CD14-positive monocyte (primary cell): ENCODE measurements at regions of chr1 and their contacts with region 1.

Region 1: GRCh38 chr1:108897865-108898720 is 21.3 kb downstream of the GPSM2 start:
- DNase-seq: peak; percentile 38 to 69 (median 50)
- H3K4me3 ChIP-seq: no peak overlapping the region
- H3K4me3 Mint-ChIP-seq: no peak overlapping the region
- H3K27ac ChIP-seq: no peak overlapping the region
- H3K27ac Mint-ChIP-seq: peak overlapping the region in 2 of 7 donors; percentile 31 to 55
- H3K4me1 ChIP-seq: no peaks in the 10 kb centered on the region
- H3K4me1 Mint-ChIP-seq: peaks cover 7% of the 10 kb centered on the region
- H3K27me3 ChIP-seq: no peaks in the 10 kb centered on the region
- H3K27me3 Mint-ChIP-seq: no peaks in the 10 kb centered on the region
- CTCF ChIP-seq: peak; percentile 81

Region 2: DNA sequence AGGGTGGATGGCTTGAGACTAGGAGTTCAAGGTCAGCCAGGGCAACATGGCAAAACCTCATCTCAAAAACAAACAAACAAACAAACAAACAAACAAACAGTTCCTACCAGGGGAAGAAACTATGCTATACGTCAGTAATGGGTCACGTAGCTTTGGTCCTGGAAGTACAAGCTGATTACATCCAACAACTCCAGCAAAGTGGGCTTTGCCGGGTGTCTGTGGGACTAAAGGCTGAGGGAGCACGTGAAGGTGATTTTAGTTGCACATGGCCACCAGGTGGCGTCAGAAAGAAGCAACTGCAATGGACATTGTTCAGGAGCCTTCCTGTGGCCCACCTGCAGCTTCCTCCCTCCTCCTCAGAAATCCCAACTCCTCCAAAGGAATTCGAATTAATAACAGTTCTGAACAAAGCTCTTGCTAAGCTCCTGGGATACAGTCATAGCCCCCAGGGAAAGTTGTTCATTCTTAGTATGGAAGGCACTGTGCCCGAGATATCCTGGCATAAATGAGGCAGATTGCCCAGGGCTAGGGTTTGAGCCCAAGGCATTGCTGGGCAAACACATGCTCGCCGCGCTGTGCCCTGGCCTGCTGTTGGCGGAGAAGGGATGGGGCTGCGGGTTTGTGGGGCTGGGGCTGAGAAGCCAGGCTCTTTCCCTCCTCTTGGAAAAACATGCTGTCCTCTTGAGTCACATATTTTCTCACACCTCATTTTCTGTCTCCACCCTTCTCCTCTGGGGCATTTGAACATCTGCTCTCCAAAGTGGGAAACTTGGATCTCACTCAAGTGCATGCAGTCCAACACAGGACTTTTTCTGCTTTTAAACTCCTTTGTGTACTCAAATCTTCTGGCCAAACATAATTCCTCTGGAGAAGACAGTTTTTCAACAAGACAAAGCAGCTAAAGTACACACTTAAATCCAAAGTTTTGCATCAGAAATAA is 69.8 kb before region 1 on chr1:
- intact Hi-C with region 1: loop called (anchors 2 kb)
- DNase-seq: peak; percentile 49 to 54 (median 52)
- H3K4me3 ChIP-seq: no peak overlapping the region
- H3K4me3 Mint-ChIP-seq: no peak overlapping the region
- H3K27ac ChIP-seq: no peak overlapping the region
- H3K27ac Mint-ChIP-seq: peak overlapping the region in 1 of 7 donors; percentile 41
- H3K4me1 ChIP-seq: peaks cover 6 to 7% of the 10 kb centered on the region in 2 donors
- H3K4me1 Mint-ChIP-seq: peaks cover 18% of the 10 kb centered on the region
- H3K27me3 ChIP-seq: no peaks in the 10 kb centered on the region
- H3K27me3 Mint-ChIP-seq: no peaks in the 10 kb centered on the region
- CTCF ChIP-seq: peak; percentile 88

Region 3: GRCh38 chr1:108947871-108948525 is 49.9 kb after region 1 on chr1:
- intact Hi-C with region 1: no loop called
- DNase-seq: no peak
- H3K4me3 ChIP-seq: no peak overlapping the region
- H3K4me3 Mint-ChIP-seq: no peak overlapping the region
- H3K27ac ChIP-seq: peak overlapping the region in 1 of 2 donors; percentile 11
- H3K27ac Mint-ChIP-seq: peak overlapping the region in 4 of 7 donors; percentile 23 to 74 (median 58)
- H3K4me1 ChIP-seq: no peaks in the 10 kb centered on the region
- H3K4me1 Mint-ChIP-seq: peaks cover 9% of the 10 kb centered on the region
- H3K27me3 ChIP-seq: no peaks in the 10 kb centered on the region
- H3K27me3 Mint-ChIP-seq: peaks cover 0 to 2% (median 0%) of the 10 kb centered on the region in 3 donors
- CTCF ChIP-seq: no peak

Region 4: DNA sequence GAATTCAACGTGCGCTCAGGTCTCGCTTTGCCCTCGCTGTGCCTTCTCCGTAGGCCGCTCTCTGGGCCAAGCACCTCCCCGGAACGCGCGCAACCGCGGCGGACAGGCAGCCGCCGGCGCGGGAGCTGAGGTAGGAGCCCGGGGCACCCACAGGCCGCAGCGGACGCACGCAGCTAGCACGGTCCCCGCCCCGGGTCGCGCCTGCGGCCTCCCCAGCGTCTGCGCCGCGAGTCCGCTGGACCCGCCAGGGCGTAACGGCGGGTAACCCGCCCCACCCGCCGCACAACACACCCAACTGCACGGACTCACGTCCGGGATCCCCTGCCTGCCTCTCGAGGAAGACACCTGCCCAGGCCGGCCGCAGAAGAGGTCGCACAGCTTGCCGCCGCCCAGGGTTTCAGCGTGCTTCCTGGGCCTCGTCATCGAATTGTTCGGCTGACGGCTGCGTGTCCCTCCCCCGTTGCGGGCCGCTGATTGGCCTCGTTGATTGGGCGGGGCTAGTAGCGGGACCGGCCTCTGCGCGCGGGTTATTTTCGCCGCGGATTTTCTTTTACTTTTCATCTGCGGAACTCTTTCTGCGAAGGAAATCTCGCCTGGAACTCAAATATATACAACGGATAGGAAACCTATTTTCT is 65.1 kb after region 1 on chr1 and contains the start of gene CLCC1:
- intact Hi-C with region 1: no loop called
- DNase-seq: peak; percentile 84
- H3K4me3 ChIP-seq: peak within 1 kb of the TSS; percentile 52 to 80 (median 73)
- H3K4me3 Mint-ChIP-seq: peak within 1 kb of the TSS; percentile 87 to 90
- H3K27ac ChIP-seq: peak within 1 kb of the TSS; percentile 83 to 88
- H3K27ac Mint-ChIP-seq: peak within 1 kb of the TSS; percentile 90 to 97 (median 96)
- H3K4me1 ChIP-seq: peaks cover 16 to 21% of the 10 kb centered on the region in 2 donors
- H3K4me1 Mint-ChIP-seq: peaks cover 20% of the 10 kb centered on the region
- H3K27me3 ChIP-seq: no peaks in the 10 kb centered on the region
- H3K27me3 Mint-ChIP-seq: peaks cover 0 to 2% (median 0%) of the 10 kb centered on the region in 3 donors
- CTCF ChIP-seq: no peak
- polyA plus RNA-seq, gene CLCC1: 7.1 to 12.9 (median 9.4) TPM